ENCODE measurements at regions of chr14 and their contacts with region 1.

Region 1: GRCh38 chr14:106210652-106211051 is 684.3 kb downstream of the TMEM121 start:
- DNase-seq: peak in 8 of 14 experiments; percentile 11 to 64 (median 32)
- ATAC-seq: no peak
- H3K4me3 ChIP-seq: no peak overlapping the region
- H3K4me3 Mint-ChIP-seq: no peak overlapping the region
- H3K27ac ChIP-seq: no peak overlapping the region
- H3K27ac Mint-ChIP-seq: no peak overlapping the region
- H3K4me1 ChIP-seq: peaks cover 11% of the 10 kb centered on the region
- H3K4me1 Mint-ChIP-seq: peaks cover 19% of the 10 kb centered on the region
- H3K27me3 ChIP-seq: peaks cover 0 to 2% of the 10 kb centered on the region in 2 experiments
- H3K27me3 Mint-ChIP-seq: peaks cover 3% of the 10 kb centered on the region
- CTCF ChIP-seq: no peak

Region 2: DNA sequence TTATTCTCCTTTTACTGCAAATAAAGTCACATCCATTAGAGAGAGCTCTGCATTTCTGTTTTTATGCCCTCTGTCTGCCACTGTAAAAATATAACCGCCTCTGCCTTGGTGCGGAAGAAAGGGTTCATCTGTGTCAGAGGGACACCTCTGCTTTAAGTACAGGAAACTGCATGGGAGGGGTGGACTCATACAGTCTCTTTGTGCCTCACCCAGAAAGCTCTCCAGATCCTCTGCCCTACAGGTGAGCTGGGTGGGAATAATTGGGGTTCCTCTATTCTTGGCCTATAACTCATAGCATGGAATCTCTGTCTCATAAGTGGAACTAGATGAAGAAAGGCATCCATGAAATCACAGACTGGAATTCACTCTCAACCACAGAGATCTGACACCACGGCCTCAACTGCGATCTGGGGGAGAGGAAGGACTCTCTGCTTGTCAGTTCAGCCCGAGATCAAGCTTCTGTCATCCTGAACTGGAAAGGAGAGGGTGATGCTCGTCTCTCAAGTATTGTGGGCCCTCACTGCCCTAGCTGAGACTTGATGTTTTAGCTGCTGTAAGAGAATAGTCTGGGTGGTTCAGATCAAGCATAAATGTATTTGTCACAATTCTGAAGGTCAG is 18.0 kb after region 1 on chr14:
- CTCF ChIA-PET with region 1: interaction called, 5 read pairs
- POLR2A ChIA-PET with region 1: interaction called, 35 read pairs
- intact Hi-C with region 1: loop called in 1 of 2 experiments (anchors 2 kb)
- DNase-seq: peak in 11 of 14 experiments; percentile 25 to 77 (median 52)
- ATAC-seq: peak; percentile 96
- H3K4me3 ChIP-seq: peak overlapping the region; percentile 37
- H3K4me3 Mint-ChIP-seq: peak overlapping the region; percentile 82
- H3K27ac ChIP-seq: peak overlapping the region; percentile 57 to 68
- H3K27ac Mint-ChIP-seq: peak overlapping the region; percentile 93
- H3K4me1 ChIP-seq: peaks cover 34% of the 10 kb centered on the region
- H3K4me1 Mint-ChIP-seq: peaks cover 85% of the 10 kb centered on the region
- H3K27me3 ChIP-seq: no peaks in the 10 kb centered on the region
- H3K27me3 Mint-ChIP-seq: peaks cover 5% of the 10 kb centered on the region
- CTCF ChIP-seq: peak; percentile 39

Region 3: GRCh38 chr14:106235356-106236159 is 24.9 kb after region 1 on chr14:
- CTCF ChIA-PET with region 1: interaction called, 4 read pairs
- POLR2A ChIA-PET with region 1: interaction called, 4 read pairs
- intact Hi-C with region 1: loop called (anchors 1 to 2 kb)
- DNase-seq: no peak
- ATAC-seq: no peak
- H3K4me3 ChIP-seq: no peak overlapping the region
- H3K4me3 Mint-ChIP-seq: no peak overlapping the region
- H3K27ac ChIP-seq: no peak overlapping the region
- H3K27ac Mint-ChIP-seq: peak overlapping the region; percentile 75
- H3K4me1 ChIP-seq: peaks cover 19% of the 10 kb centered on the region
- H3K4me1 Mint-ChIP-seq: peaks cover 44% of the 10 kb centered on the region
- H3K27me3 ChIP-seq: no peaks in the 10 kb centered on the region
- H3K27me3 Mint-ChIP-seq: peaks cover 19% of the 10 kb centered on the region
- CTCF ChIP-seq: no peak

Region 4: DNA sequence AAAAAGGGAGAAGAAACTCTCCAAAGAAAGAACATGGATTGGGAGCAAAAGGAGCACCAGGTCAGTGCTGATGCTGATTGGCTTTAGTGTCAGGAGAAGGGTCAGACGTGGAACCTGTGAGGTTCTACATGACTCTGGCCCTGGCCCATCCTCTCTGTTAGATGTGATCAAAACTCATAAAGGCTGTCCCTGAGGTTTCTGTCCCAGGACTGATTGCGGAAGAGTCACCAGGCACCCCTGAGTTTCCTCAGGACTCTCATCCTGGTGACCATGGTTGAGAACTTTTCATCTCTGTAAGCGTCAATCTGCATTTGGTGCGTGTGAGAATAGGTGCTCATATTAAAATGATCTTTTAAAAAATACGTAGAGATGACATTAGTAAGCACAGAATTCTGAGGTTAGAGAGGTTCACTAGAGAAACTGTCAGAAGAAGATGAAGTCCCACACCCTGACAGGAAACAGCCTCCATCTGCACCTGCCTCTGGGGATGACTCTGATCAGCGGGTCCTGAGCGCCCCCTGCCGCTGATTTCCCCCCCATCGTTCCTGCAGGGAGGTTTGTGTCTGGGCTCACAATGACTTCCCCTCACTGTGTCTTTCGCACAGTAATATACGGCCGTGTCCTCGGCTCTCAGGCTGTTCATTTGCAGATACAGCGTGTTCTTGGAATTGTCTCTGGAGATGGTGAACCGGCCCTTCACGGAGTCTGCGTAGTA is 57.5 kb after region 1 on chr14:
- CTCF ChIA-PET with region 1: no interaction called
- POLR2A ChIA-PET with region 1: no interaction called
- intact Hi-C with region 1: loop called in 1 of 2 experiments (anchors 2 kb)
- DNase-seq: peak; percentile 68 to 97 (median 80)
- ATAC-seq: peak; percentile 95
- H3K4me3 ChIP-seq: no peak overlapping the region
- H3K4me3 Mint-ChIP-seq: no peak overlapping the region
- H3K27ac ChIP-seq: no peak overlapping the region
- H3K27ac Mint-ChIP-seq: peak overlapping the region; percentile 46
- H3K4me1 ChIP-seq: peaks cover 9% of the 10 kb centered on the region
- H3K4me1 Mint-ChIP-seq: peaks cover 11% of the 10 kb centered on the region
- H3K27me3 ChIP-seq: no peaks in the 10 kb centered on the region
- H3K27me3 Mint-ChIP-seq: peaks cover 24% of the 10 kb centered on the region
- CTCF ChIP-seq: peak; percentile 77